ENCODE measurements at regions of chr14 and their contacts with region 1.

Region 1: GRCh38 chr14:93549595-93549994 is 118.9 kb downstream of the UNC79 start:
- DNase-seq: no peak
- H3K4me3 ChIP-seq: no peak overlapping the region
- H3K27ac ChIP-seq: no peak overlapping the region
- H3K4me1 ChIP-seq: no peaks in the 10 kb centered on the region
- H3K27me3 ChIP-seq: peaks cover 61% of the 10 kb centered on the region
- CTCF ChIP-seq: no peak

Region 2: DNA sequence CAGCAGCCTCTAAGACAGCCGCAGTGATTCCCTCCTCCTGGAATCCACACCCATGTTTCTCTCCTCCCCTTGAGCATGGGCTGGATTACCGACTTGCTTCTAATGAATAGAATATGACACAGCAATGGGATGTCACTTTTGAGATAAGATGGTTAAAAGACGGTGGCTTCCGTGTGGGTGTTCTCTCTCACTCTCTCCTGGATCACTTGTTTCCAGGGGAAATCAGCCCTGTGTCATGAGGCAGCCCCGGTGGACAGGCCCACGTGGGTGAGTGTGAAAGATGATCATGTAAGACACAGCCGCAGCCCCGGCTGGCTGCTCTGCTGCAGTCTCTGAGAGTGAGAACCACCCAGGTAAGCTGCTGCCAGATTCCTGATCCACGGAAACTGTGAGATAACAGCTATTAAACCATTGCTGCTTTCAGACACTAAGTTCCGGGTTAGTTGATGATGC is 375.6 kb before region 1 on chr14:
- CTCF ChIA-PET with region 1: interaction called, 18 read pairs
- POLR2A ChIA-PET with region 1: no interaction called
- intact Hi-C with region 1: no loop called
- DNase-seq: no peak
- H3K4me3 ChIP-seq: no peak overlapping the region
- H3K27ac ChIP-seq: no peak overlapping the region
- H3K4me1 ChIP-seq: no peaks in the 10 kb centered on the region
- H3K27me3 ChIP-seq: no peaks in the 10 kb centered on the region
- CTCF ChIP-seq: no peak